ENCODE measurements at regions of chr5 and their contacts with region 1.

Region 1: DNA sequence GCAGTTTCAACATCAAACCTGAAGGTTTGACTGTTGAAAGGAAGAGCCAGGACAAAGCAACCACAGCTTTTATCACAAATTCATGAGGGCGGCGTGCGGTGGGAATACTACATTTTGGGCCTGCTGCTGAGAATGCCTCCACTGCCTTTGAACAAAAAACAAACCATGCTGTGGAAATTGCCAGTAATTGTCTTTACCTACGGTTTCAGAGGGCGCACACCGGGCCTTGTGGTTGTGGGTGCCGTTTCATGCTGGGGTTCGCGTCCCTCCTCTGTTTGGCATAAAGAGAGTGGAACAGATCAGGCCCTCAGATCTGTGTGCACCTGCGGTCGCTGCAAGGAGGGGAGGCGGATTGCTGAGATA is 27.6 kb upstream of the TCF7 start:
- DNase-seq: peak; percentile 93
- ATAC-seq: peak; percentile 82
- H3K4me3 Mint-ChIP-seq: peak overlapping the region; percentile 46
- H3K27ac Mint-ChIP-seq: peak overlapping the region; percentile 76
- H3K4me1 Mint-ChIP-seq: peaks cover 76% of the 10 kb centered on the region
- H3K27me3 Mint-ChIP-seq: no peaks in the 10 kb centered on the region
- CTCF ChIP-seq: no peak

Region 2: DNA sequence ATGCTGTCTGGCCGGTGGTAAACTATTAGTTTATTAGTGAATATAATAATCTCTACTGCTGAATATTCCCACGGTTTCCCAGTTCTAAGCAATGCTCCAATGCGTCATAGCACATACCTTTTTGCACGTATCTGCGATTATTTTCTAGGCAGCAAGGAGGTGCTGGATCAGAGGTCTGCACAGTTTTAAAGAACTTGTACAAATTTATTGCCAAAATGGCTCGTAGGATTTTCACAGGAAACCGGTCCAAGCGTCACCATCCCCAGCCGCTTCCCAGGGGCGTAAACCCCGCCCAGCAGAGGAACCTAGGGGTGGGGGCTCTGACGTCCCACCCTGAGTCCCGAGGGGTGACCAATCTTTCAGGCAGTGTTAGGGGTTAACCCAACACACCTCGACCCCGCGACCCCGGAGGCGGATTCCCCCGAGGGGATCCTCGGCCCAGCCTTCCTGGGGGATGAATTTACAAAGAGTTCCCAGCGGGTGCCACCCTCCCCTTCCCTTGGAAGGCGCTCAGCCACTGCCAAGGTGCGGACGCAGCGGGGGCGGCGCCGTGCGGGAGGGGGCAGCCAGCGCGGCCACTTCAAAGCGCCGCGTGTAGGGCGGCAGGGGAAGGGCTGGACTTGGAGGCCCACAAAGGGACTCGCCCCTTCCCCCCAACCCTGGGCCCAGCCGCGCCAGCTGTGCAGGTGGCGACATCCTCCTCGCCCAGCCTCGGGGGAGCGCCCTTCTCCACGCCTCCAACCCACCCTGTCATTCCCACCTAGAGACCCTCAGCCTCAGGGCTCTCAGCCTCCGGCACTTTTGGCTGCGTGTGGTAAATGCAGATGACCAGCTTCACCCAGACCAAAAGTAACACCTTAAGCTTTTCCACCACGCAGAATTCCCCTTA is 16.0 kb before region 1 on chr5:
- CTCF ChIA-PET with region 1: interaction called, 7 read pairs
- POLR2A ChIA-PET with region 1: interaction called, 4 read pairs
- intact Hi-C with region 1: loop called (anchors 2 kb)
- DNase-seq: peak; percentile 69
- ATAC-seq: peak; percentile 55
- H3K4me3 Mint-ChIP-seq: peak overlapping the region; percentile 64
- H3K27ac Mint-ChIP-seq: peak overlapping the region; percentile 89
- H3K4me1 Mint-ChIP-seq: peaks cover 65% of the 10 kb centered on the region
- H3K27me3 Mint-ChIP-seq: no peaks in the 10 kb centered on the region
- CTCF ChIP-seq: no peak